ENCODE measurements at regions of chr17 and their contacts with region 1.

Region 1: GRCh38 chr17:27601069-27601975 is 29.7 kb upstream of the LGALS9 start:
- DNase-seq: peak; percentile 73
- ATAC-seq: peak; percentile 56 to 72
- H3K4me3 ChIP-seq: no peak overlapping the region
- H3K27ac ChIP-seq: no peak overlapping the region
- H3K4me1 ChIP-seq: peaks cover 10% of the 10 kb centered on the region
- H3K27me3 ChIP-seq: no peaks in the 10 kb centered on the region
- CTCF ChIP-seq: peak; percentile 93

Region 2: DNA sequence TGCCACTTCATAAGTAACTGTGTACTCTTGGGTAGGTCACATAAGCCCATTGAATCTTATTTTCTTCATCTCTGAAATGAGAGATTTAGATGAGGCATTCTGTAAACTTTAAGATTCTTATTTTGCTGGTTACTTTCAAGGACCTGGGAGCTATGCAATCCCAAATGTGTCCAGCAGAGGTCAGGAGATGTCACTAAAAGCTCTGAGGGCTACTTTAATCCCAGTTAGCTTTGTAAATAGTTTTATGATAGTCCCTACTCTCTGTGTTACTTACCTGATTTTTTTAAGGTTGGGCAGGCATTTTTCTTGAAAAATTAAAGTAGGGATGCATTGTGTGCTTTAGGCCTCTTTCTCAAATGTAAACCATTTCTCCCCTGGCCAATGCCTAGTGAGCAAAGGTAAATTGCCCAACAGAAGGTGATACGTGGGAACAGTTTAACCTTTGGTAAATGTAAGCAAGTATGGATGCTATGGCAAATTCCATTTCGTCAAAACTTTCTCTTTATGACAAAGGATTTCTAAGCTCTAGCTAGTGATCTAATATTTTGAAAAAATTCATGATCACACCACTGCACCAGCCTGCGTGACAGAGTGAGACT is 364.5 kb before region 1 on chr17:
- intact Hi-C with region 1: loop called (anchors 10 kb)
- DNase-seq: no peak
- ATAC-seq: peak; percentile 65 to 76
- H3K4me3 ChIP-seq: no peak overlapping the region
- H3K27ac ChIP-seq: no peak overlapping the region
- H3K4me1 ChIP-seq: peaks cover 35% of the 10 kb centered on the region
- H3K27me3 ChIP-seq: no peaks in the 10 kb centered on the region
- CTCF ChIP-seq: peak; percentile 98

Region 3: DNA sequence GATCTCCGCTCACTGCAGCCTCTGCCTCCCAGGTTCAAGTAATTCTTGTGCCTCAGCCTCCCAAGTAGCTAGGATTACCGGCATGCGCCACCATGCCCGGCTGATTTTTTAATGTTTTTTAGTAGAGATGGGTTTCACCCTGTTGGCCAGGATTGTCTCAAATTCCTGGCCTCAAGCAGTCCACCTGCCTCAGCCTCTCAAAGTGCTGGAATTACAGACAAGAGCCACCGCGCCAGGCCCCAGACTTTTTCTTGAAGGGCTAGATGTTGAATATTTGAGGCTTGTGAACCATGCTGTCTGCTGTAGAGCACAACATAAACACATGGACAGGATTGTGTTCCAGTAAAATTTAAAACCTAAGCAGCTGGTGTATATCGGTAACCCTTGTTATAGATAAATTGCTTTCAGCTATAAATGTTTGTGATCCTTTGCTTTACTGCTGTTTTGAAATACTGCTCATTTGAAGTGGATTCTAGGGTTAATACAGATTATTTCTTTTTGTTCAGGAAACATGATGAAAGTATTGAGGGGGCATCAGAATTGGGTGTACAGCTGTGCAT is 295.0 kb before region 1 on chr17:
- intact Hi-C with region 1: no loop called
- DNase-seq: no peak
- ATAC-seq: no peak
- H3K4me3 ChIP-seq: no peak overlapping the region
- H3K27ac ChIP-seq: no peak overlapping the region
- H3K4me1 ChIP-seq: peaks cover 69% of the 10 kb centered on the region
- H3K27me3 ChIP-seq: no peaks in the 10 kb centered on the region
- CTCF ChIP-seq: no peak

Region 4: DNA sequence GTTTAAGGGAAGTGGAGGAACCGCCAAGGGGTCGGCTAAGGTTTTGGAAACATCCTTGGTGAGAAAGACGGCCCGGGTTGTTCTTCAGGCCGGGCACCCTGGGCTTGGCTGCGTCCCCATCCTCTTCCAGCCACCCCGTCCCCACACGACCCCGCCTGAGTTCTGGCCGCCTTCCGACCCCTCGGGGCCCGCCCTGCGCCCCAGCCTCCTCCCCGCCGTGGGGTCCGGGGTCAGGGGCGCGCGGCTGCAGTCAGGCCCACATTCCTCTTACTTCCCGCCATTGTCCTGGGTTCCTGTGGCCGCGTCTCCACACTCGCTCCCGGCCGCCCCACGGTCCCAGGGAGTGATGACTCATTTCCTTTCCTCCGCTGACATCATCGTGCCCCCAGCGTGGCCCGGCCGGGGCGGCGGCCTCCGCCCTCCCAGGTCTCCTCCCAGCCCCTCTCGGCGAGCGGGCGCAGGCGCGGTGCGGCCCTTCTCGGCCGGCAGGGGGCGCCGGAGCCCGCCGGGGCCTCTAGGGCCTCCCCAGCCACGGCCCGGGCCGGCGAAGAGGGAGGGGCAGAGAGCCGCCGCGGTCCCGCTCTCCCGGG is 247.8 kb before region 1 on chr17:
- intact Hi-C with region 1: loop called (anchors 10 kb)
- DNase-seq: peak; percentile 92
- ATAC-seq: peak; percentile 94 to 98
- H3K4me3 ChIP-seq: peak overlapping the region; percentile 63
- H3K27ac ChIP-seq: peak overlapping the region; percentile 95
- H3K4me1 ChIP-seq: peaks cover 29% of the 10 kb centered on the region
- H3K27me3 ChIP-seq: no peaks in the 10 kb centered on the region
- CTCF ChIP-seq: peak; percentile 87

Region 5: GRCh38 chr17:27519550-27519949 is 81.8 kb before region 1 on chr17:
- intact Hi-C with region 1: no loop called
- DNase-seq: no peak
- ATAC-seq: no peak
- H3K4me3 ChIP-seq: no peak overlapping the region
- H3K27ac ChIP-seq: no peak overlapping the region
- H3K4me1 ChIP-seq: peaks cover 29% of the 10 kb centered on the region
- H3K27me3 ChIP-seq: no peaks in the 10 kb centered on the region
- CTCF ChIP-seq: no peak

Measured in lower lobe of right lung (tissue), 2 donors.